Caco-2 (cell line): ENCODE measurements at regions of chr17 and their contacts with region 1.

Region 1: GRCh38 chr17:17237026-17237799 is at the start of gene FLCN:
- DNase-seq: peak; percentile 85 to 89
- H3K4me3 ChIP-seq: peak within 1 kb of the TSS; percentile 85
- H3K4me3 Mint-ChIP-seq: peak within 1 kb of the TSS; percentile 88
- H3K27ac Mint-ChIP-seq: peak within 1 kb of the TSS; percentile 100
- H3K4me1 ChIP-seq: peaks cover 25% of the 10 kb centered on the region
- H3K4me1 Mint-ChIP-seq: peaks cover 19% of the 10 kb centered on the region
- H3K27me3 ChIP-seq: no peaks in the 10 kb centered on the region
- H3K27me3 Mint-ChIP-seq: no peaks in the 10 kb centered on the region
- CTCF ChIP-seq: no peak
- total RNA-seq, gene FLCN: 69.0 and 71.9 TPM in 2 replicates

Region 2: DNA sequence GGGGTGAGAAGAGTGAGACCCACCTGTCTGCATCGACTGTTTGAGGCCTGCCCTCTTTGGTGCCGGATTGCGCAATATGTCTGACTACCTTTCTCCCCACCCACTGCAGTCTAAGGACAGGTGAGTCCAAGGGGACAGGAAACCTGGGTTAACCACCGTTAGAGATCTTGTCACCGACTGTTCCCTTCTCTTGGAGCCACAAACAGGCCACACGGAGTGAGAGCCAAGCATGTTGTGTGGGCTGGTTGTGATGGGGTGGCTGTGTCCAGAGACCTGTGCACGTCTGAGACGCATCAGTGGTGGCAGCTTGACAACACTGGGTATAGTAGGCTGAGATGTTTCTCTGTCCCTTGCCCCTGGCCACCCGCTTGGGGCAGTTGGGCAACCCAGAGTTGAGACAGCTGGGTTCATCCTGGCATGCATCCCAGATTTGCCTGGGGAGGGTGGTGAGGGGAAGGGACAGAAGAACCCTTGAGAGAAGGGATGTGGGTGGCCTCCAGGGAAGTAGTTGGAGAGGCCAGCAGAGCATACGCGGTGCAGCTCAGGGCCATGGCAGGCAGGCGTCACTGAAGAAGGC is 173.6 kb before region 1 on chr17:
- CTCF ChIA-PET with region 1: interaction called, 10 read pairs
- POLR2A ChIA-PET with region 1: no interaction called
- intact Hi-C with region 1: no loop called
- DNase-seq: no peak
- H3K4me3 ChIP-seq: no peak overlapping the region
- H3K4me3 Mint-ChIP-seq: no peak overlapping the region
- H3K27ac Mint-ChIP-seq: peak overlapping the region; percentile 51
- H3K4me1 ChIP-seq: peaks cover 19% of the 10 kb centered on the region
- H3K4me1 Mint-ChIP-seq: peaks cover 24% of the 10 kb centered on the region
- H3K27me3 ChIP-seq: no peaks in the 10 kb centered on the region
- H3K27me3 Mint-ChIP-seq: no peaks in the 10 kb centered on the region
- CTCF ChIP-seq: no peak

Region 3: DNA sequence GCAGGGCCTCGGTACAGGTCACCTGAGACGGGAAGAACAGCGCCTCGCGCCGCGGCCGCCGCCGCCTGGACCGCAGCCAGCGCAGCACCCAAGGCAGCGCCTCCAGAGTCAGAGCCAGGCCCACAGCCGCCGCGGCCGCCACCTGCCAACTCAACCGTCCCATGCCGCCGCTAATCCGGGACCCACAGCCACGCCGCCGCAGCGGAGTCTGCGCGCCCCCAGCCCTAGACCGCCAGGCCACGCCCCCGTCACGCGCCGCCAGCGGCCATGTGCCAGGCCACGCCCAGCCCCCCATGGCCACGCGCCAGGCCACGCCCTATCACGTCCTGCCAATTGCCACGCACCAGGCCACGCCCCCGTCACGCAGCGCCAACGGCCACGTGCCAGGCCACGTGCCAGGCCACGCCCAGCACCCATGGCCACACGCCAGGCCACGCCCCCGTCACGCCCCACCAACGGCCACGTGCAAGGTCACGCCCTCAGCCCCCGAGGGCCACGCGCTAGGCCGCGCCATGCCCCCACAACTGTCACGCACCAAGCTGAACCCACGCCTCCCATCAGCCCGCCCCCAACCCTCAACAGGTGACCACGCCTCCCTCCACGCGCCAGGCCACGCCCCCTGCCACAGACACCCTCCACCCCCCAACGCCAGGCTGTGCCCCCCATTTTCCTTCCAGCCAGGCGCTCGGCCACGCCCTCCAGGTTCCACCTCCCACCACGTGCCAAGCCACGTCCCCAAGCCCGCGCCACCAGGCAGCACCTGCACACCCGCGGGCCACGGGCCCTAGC is 30.9 kb before region 1 on chr17 and contains the start of gene PLD6:
- CTCF ChIA-PET with region 1: no interaction called
- POLR2A ChIA-PET with region 1: no interaction called
- intact Hi-C with region 1: loop called (anchors 1 kb)
- DNase-seq: peak; percentile 96
- H3K4me3 ChIP-seq: peak within 1 kb of the TSS; percentile 79
- H3K4me3 Mint-ChIP-seq: peak within 1 kb of the TSS; percentile 81
- H3K27ac Mint-ChIP-seq: peak within 1 kb of the TSS; percentile 83
- H3K4me1 ChIP-seq: peaks cover 7% of the 10 kb centered on the region; the same call in 1 of the 2 replicates
- H3K4me1 Mint-ChIP-seq: peaks cover 5% of the 10 kb centered on the region
- H3K27me3 ChIP-seq: no peaks in the 10 kb centered on the region
- H3K27me3 Mint-ChIP-seq: no peaks in the 10 kb centered on the region
- CTCF ChIP-seq: no peak
- total RNA-seq, gene PLD6: 7.1 and 8.0 TPM in 2 replicates

Region 4: GRCh38 chr17:17280613-17281549 is 43.7 kb after region 1 on chr17 and contains the start of gene COPS3:
- CTCF ChIA-PET with region 1: no interaction called
- POLR2A ChIA-PET with region 1: interaction called, 9 read pairs
- intact Hi-C with region 1: loop called (anchors 2 kb)
- DNase-seq: peak; percentile 98
- H3K4me3 ChIP-seq: peak within 1 kb of the TSS; percentile 93
- H3K4me3 Mint-ChIP-seq: peak within 1 kb of the TSS; percentile 88
- H3K27ac Mint-ChIP-seq: peak within 1 kb of the TSS; percentile 97
- H3K4me1 ChIP-seq: peaks cover 4% of the 10 kb centered on the region
- H3K4me1 Mint-ChIP-seq: peaks cover 14% of the 10 kb centered on the region
- H3K27me3 ChIP-seq: no peaks in the 10 kb centered on the region
- H3K27me3 Mint-ChIP-seq: no peaks in the 10 kb centered on the region
- CTCF ChIP-seq: no peak
- total RNA-seq, gene COPS3: 120 and 127 TPM in 2 replicates

Region 5: DNA sequence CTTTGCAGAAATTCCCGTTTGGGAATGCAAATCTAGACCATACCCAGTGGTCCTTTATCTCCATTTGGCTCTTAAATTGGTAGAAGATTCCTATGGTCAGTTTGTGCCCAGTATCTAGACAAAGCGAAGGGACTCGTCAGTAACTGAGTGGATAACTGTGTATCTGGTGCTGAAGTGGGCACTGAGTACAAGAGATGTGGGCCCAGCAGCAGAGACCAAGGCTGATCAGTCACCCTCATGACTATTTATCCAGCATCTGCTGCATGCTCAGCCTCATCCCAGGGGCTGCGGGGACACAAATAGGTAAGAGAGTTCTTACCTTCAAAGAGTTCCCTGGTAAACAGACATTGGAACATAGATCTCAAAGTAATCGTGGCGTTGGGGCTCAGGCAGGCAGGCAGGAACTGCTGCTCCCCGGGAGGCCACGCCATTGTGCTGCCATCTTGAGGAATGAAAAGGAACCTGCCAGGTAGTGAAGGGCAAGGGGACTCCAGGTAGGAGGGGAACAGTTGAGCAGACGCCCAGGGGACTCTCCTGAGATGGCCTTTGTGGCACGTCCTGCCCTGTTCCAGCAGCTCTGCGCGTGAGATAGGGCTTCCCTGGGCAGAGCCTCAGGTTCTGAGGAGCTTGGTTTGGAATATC is 76.3 kb after region 1 on chr17:
- CTCF ChIA-PET with region 1: no interaction called
- POLR2A ChIA-PET with region 1: no interaction called
- intact Hi-C with region 1: loop called (anchors 10 kb)
- DNase-seq: peak; percentile 80 to 82
- H3K4me3 ChIP-seq: no peak overlapping the region
- H3K4me3 Mint-ChIP-seq: no peak overlapping the region
- H3K27ac Mint-ChIP-seq: no peak overlapping the region
- H3K4me1 ChIP-seq: no peaks in the 10 kb centered on the region
- H3K4me1 Mint-ChIP-seq: no peaks in the 10 kb centered on the region
- H3K27me3 ChIP-seq: no peaks in the 10 kb centered on the region
- H3K27me3 Mint-ChIP-seq: no peaks in the 10 kb centered on the region
- CTCF ChIP-seq: peak; percentile 74 to 89